ENCODE measurements at regions of chr2 and their contacts with region 1.

Region 1: DNA sequence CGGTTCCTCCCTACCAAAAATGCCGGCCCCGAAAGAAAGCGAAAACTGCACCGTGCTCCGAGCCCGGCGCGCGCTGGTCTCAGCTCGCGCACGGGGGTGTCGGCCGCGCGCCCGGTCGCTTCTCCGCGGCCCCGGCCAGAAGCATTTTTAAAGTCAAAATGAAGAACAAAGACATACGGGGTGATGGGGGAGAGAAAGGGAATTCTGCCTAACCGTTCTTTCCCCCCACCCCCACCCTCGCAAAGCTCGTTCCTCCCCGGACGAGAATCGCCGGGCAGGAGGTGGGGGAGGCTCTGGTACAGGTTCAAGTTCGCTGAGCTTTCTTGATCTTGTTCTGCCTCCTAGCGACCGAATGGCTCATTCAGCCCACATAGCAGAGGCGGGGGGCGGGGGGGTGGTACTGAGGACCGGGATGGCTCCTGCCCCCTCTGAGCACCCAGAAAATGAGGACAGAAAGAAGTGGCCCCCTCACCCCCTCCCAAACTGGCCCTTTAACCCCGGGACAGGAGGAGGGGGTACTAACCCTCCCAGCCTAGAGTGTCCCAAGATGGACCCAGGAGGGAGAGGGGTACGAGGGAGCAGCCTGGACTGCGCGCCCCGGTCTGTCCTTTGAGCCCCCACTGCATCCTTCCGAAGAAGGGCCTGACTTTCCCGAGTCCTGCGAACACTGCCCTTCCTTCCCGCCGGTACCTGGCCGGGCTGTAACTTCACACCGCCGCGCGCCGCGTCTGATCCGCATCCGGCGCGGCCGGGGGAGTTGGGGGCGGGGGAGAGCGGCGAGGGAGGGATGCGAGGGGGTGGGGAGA is 3.1 kb downstream of the BCL11A start:
- DNase-seq: peak; percentile 94
- ATAC-seq: peak; percentile 54
- H3K4me3 ChIP-seq: peak overlapping the region; percentile 78 to 98 (median 88)
- H3K4me3 Mint-ChIP-seq: peak overlapping the region; percentile 97
- H3K27ac ChIP-seq: peak overlapping the region; percentile 77 to 91
- H3K27ac Mint-ChIP-seq: peak overlapping the region; percentile 91
- H3K4me1 ChIP-seq: peaks cover 29 to 35% of the 10 kb centered on the region in 2 donors
- H3K4me1 Mint-ChIP-seq: peaks cover 36% of the 10 kb centered on the region
- H3K27me3 ChIP-seq: no peaks in the 10 kb centered on the region
- H3K27me3 Mint-ChIP-seq: no peaks in the 10 kb centered on the region
- CTCF ChIP-seq: peak; percentile 80

Region 2: GRCh38 chr2:58803192-58803591 is 1747.2 kb before region 1 on chr2:
- CTCF ChIA-PET with region 1: no interaction called
- POLR2A ChIA-PET with region 1: no interaction called
- intact Hi-C with region 1: no loop called
- DNase-seq: no peak
- ATAC-seq: no peak
- H3K4me3 ChIP-seq: no peak overlapping the region
- H3K4me3 Mint-ChIP-seq: no peak overlapping the region
- H3K27ac ChIP-seq: no peak overlapping the region
- H3K27ac Mint-ChIP-seq: no peak overlapping the region
- H3K4me1 ChIP-seq: no peaks in the 10 kb centered on the region
- H3K4me1 Mint-ChIP-seq: no peaks in the 10 kb centered on the region
- H3K27me3 ChIP-seq: no peaks in the 10 kb centered on the region
- H3K27me3 Mint-ChIP-seq: peaks cover 3% of the 10 kb centered on the region
- CTCF ChIP-seq: no peak

Region 3: DNA sequence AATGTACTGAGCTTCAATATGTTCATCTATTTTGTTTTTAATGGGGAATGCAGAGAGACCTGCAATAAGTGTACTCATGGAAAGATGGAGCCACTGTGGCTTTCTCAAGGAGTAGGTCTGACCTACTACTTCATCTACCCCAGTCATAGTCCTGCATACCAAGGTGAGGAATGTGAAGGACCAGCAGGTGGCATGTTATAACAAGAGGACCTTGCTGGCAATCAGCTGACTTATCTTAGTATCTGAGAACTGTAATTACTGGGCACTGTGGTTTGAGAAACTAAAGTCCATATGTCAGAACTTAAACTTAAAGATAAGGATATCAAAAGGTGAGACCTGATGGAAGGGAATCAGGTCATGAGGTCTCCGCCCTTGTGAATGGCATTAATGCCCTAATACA is 1101.1 kb before region 1 on chr2:
- CTCF ChIA-PET with region 1: interaction called, 33 read pairs
- POLR2A ChIA-PET with region 1: no interaction called
- intact Hi-C with region 1: loop called (anchors 1 kb)
- DNase-seq: peak; percentile 65
- ATAC-seq: peak; percentile 78
- H3K4me3 ChIP-seq: no peak overlapping the region
- H3K4me3 Mint-ChIP-seq: no peak overlapping the region
- H3K27ac ChIP-seq: no peak overlapping the region
- H3K27ac Mint-ChIP-seq: no peak overlapping the region
- H3K4me1 ChIP-seq: no peaks in the 10 kb centered on the region
- H3K4me1 Mint-ChIP-seq: no peaks in the 10 kb centered on the region
- H3K27me3 ChIP-seq: no peaks in the 10 kb centered on the region
- H3K27me3 Mint-ChIP-seq: peaks cover 4% of the 10 kb centered on the region
- CTCF ChIP-seq: no peak

Region 4: DNA sequence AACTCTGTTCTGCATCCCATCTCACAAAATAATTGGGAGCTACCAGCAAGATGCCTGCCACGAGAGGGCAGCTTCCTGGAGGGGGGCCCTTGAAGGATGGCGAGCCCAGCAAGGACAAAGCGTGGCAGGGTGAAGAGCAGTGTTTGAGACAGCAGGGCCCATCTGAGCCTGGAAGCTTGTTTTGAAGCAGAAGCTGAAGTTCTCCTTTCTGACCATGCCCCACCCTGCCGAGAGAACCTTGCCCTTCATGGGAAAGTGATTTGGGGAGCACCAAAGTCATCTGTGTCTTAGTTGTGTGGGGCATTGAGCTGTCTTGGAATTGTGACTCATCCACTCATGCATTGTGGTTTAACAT is 213.3 kb before region 1 on chr2:
- CTCF ChIA-PET with region 1: interaction called, 29 read pairs
- POLR2A ChIA-PET with region 1: interaction called, 4 read pairs
- intact Hi-C with region 1: no loop called
- DNase-seq: peak; percentile 68
- ATAC-seq: peak; percentile 83
- H3K4me3 ChIP-seq: no peak overlapping the region
- H3K4me3 Mint-ChIP-seq: peak overlapping the region; percentile 27
- H3K27ac ChIP-seq: peak overlapping the region; percentile 89 to 91
- H3K27ac Mint-ChIP-seq: peak overlapping the region; percentile 91
- H3K4me1 ChIP-seq: peaks cover 46 to 72% of the 10 kb centered on the region in 2 donors
- H3K4me1 Mint-ChIP-seq: peaks cover 66% of the 10 kb centered on the region
- H3K27me3 ChIP-seq: no peaks in the 10 kb centered on the region
- H3K27me3 Mint-ChIP-seq: no peaks in the 10 kb centered on the region
- CTCF ChIP-seq: no peak

Region 5: DNA sequence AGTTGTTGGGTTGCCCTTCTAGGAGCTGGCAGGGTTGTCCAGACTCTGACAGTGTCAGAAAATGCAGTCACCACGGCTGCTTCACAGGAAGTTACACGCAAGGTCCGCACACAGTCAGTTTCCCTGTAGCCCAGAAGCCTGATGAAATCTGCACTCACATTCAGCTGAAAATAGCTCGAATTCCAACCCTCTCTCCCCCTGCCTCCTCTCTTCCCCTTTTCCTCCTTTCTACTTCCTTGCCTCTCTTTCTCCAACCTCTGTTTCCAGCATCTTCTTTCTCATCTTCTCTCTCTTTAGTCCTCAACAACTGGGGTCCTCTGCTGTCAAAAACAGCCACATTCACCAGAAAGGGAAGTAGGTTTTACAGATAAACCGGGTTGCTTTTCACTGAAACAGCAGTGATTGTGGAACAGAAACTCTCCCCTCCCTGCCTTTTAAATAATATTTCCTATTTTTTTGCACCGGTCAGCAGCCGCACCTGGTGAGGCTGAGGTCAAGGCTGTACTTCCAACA is 66.2 kb before region 1 on chr2:
- CTCF ChIA-PET with region 1: interaction called, 5 read pairs
- POLR2A ChIA-PET with region 1: interaction called, 3 read pairs
- intact Hi-C with region 1: loop called (anchors 2 kb)
- DNase-seq: peak; percentile 76
- ATAC-seq: peak; percentile 68
- H3K4me3 ChIP-seq: peak overlapping the region; percentile 11 to 59 (median 48)
- H3K4me3 Mint-ChIP-seq: peak overlapping the region; percentile 79
- H3K27ac ChIP-seq: peak overlapping the region; percentile 76 to 93
- H3K27ac Mint-ChIP-seq: peak overlapping the region; percentile 88
- H3K4me1 ChIP-seq: peaks cover 99% of the 10 kb centered on the region in 2 donors
- H3K4me1 Mint-ChIP-seq: peaks cover 94% of the 10 kb centered on the region
- H3K27me3 ChIP-seq: no peaks in the 10 kb centered on the region
- H3K27me3 Mint-ChIP-seq: no peaks in the 10 kb centered on the region
- CTCF ChIP-seq: no peak

Region 6: DNA sequence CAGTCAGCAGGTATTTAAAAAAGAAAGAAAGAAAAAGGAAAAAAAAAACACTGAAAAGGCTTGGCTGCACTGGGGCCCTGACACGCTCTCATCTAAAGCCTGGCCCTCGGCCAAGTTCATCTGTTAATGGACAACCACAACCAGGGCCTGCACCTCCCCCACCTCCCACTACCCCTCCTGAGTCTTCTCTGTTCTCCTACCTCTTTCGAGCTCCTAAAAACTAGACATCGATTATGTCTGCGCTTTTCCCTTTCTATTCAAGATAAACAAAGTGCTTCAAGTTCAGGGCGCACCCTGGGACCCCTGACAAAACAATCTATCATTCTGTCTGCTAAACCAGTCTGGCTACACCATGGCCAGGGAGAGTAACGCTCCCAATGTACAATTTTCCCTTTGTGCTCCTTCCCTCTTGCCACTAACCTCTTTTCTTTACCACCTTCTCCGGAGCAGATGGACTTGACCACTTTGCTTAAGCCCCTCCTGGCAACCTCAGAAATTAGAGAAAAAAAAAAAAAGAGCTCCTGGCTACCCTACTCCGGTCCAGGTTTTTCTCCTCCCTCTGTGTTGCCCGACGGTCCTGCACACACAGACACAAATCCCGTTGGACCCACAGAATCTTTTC is 19.6 kb before region 1 on chr2:
- CTCF ChIA-PET with region 1: interaction called, 10 read pairs
- POLR2A ChIA-PET with region 1: interaction called, 6 read pairs
- intact Hi-C with region 1: loop called (anchors 2 kb)
- DNase-seq: peak; percentile 42
- ATAC-seq: peak; percentile 34
- H3K4me3 ChIP-seq: peak overlapping the region in 4 of 5 experiments; percentile 7 to 51 (median 20)
- H3K4me3 Mint-ChIP-seq: peak overlapping the region; percentile 77
- H3K27ac ChIP-seq: peak overlapping the region; percentile 33 to 80
- H3K27ac Mint-ChIP-seq: peak overlapping the region; percentile 79
- H3K4me1 ChIP-seq: peaks cover 99% of the 10 kb centered on the region in 2 donors
- H3K4me1 Mint-ChIP-seq: peaks cover 98% of the 10 kb centered on the region
- H3K27me3 ChIP-seq: no peaks in the 10 kb centered on the region
- H3K27me3 Mint-ChIP-seq: no peaks in the 10 kb centered on the region
- CTCF ChIP-seq: no peak

Region 7: DNA sequence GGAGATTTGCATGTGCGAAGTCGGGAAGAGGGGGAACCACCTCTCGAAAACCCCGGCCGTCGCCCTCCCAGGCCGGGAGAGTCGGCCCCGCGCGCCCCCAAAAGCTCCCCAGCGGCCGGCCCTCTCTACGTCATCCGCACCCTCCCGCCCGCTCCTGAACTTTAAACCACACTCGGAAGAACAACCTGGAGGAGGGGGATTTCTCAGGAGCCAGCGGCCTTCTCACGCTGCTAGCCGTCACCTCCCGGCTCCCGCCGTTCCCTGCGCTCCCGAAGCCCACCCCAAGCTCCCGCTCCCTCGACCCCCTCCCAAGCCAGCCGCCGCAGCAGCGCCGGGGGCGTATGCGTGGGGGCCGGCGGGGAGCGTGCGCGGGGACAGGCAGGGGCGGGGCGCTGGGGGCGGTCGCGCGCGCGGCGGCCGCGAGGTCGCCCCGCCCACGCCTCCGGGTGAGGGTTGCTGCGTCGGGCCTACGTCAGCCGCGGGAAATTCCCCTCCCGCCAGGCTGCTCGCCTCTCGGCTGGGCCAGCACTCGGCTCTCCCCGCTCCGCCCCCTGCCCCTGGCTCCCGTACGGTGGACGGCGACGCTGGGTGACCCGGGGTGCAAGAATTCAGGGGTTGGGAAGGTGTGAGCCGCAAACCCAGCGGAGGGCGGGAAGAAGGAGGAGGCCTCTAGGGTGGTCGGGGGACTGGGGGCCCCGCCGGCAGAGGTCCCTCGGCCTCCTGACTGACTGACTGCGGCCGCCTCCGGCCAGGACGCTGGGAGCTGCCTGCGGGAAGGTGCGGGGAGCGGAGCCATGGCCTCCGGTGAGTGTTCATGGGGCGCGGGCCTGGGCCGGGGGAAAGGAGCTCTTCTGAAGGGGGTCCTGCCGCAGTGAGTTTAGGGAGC is 330.9 kb after region 1 on chr2 and contains the start of gene REL:
- CTCF ChIA-PET with region 1: no interaction called
- POLR2A ChIA-PET with region 1: no interaction called
- intact Hi-C with region 1: loop called (anchors 10 kb)
- DNase-seq: peak; percentile 97
- ATAC-seq: peak; percentile 76
- H3K4me3 ChIP-seq: peak within 1 kb of the TSS; percentile 84 to 100 (median 100)
- H3K4me3 Mint-ChIP-seq: peak within 1 kb of the TSS; percentile 100
- H3K27ac ChIP-seq: peak within 1 kb of the TSS; percentile 100
- H3K27ac Mint-ChIP-seq: peak within 1 kb of the TSS; percentile 98
- H3K4me1 ChIP-seq: peaks cover 22 to 28% of the 10 kb centered on the region in 2 donors
- H3K4me1 Mint-ChIP-seq: peaks cover 36% of the 10 kb centered on the region
- H3K27me3 ChIP-seq: no peaks in the 10 kb centered on the region
- H3K27me3 Mint-ChIP-seq: no peaks in the 10 kb centered on the region
- CTCF ChIP-seq: no peak
- total RNA-seq, gene REL: 283 and 297 TPM in 2 replicates

Region 8: GRCh38 chr2:61006486-61007105 is 456.2 kb after region 1 on chr2:
- CTCF ChIA-PET with region 1: no interaction called
- POLR2A ChIA-PET with region 1: no interaction called
- intact Hi-C with region 1: no loop called
- DNase-seq: no peak
- ATAC-seq: no peak
- H3K4me3 ChIP-seq: no peak overlapping the region
- H3K4me3 Mint-ChIP-seq: no peak overlapping the region
- H3K27ac ChIP-seq: no peak overlapping the region
- H3K27ac Mint-ChIP-seq: no peak overlapping the region
- H3K4me1 ChIP-seq: no peaks in the 10 kb centered on the region
- H3K4me1 Mint-ChIP-seq: no peaks in the 10 kb centered on the region
- H3K27me3 ChIP-seq: no peaks in the 10 kb centered on the region
- H3K27me3 Mint-ChIP-seq: no peaks in the 10 kb centered on the region
- CTCF ChIP-seq: no peak

Measured in B cell (primary cell).